Posterior vena cava (tissue), 2 donors: ENCODE measurements at regions of chr16 and their contacts with region 1.

Region 1: DNA sequence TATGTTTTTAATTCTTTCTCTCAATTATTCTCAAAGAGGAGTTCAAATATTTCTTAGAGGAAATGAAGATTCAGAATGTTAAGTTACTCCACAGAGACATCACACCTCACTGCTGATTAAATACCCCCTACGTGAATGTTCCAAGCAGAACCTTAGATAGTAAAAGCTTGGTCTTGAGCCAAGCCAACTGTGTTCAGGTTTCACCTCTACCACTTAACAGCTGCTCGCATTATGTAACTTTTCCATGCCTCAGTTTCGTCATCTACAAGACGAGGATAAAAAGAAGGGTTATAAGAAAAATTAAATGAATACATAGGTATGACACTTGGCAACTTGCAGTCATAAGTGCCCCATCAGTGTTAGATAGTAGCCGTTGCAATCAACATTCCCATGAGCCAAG is 356.2 kb downstream of the RBFOX1 start:
- DNase-seq: no peak

Region 2: GRCh38 chr16:7571366-7571765 is 117.4 kb before region 1 on chr16:
- intact Hi-C with region 1: no loop called
- DNase-seq: no peak

Region 3: GRCh38 chr16:7744546-7745264 is 55.9 kb after region 1 on chr16:
- intact Hi-C with region 1: no loop called
- DNase-seq: no peak

Region 4: DNA sequence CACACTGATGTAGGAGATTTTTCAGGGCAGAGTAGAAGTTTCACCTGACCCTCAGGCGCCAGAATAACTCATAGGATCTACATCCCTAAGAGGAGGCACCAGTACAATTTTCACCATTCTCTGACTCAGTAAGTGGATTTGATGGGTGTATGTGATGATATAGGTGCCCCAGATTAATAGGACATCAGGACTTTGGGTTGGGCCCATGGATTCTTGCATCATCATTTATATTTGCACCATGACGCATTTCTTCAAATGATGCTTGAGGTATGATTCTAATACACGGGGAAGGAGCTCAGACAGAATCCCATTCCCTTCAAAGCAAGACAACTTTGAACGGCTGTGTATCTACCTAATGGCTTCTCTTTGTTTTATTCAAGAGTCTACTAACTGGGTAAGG is 728.3 kb after region 1 on chr16:
- intact Hi-C with region 1: loop called in 1 of 2 experiments (anchors 5 kb)
- DNase-seq: no peak